OCI-LY7 (cell line): ENCODE measurements at regions of chr4 and their contacts with region 1.

Region 1: GRCh38 chr4:105471566-105472176 is 2.2 kb downstream of the PPA2 start:
- DNase-seq: peak; percentile 79
- H3K4me3 ChIP-seq: peak overlapping the region; percentile 91
- H3K27ac ChIP-seq: peak overlapping the region; percentile 5
- H3K4me1 ChIP-seq: peaks cover 21% of the 10 kb centered on the region
- CTCF ChIP-seq: peak; percentile 88

Region 2: DNA sequence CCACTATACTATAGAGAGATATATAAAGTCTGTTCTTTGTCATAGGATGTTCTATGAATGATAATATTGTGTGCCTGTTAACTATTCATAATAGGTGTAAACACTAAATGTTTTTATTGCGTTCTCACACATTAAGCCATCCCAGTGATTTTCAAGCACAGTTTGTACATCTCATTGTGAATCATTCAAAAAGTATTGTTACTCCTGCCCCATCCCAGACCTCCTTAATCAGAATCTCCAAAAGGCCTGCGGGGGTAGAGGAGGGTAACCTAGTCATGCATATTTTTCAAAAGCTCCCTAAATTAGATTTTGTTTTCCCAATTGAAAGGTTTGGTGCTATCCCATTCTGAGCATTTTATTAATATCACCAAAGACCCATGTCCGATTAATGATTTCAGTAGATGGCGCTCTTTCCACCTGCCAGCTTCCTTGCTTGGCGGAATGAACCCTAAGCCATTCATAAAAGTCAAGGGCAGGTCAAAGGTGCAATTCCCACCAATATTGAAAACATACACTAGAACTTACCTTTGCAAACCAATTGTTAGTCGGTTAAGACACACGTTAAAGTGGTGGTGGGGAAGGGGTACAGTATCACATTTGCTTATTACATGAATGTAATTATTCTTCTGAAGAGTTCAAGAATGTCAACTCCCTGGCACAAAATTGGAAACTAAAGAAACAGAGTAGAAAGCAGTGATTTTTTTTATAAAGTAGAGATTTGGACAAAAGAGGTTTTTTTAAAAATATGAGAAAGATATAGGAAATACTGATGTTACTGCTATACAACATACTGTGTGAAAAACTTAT is 330.8 kb before region 1 on chr4:
- CTCF ChIA-PET with region 1: no interaction called
- POLR2A ChIA-PET with region 1: interaction called, 6 read pairs
- intact Hi-C with region 1: loop called (anchors 1 kb)
- DNase-seq: peak; percentile 55
- H3K4me3 ChIP-seq: no peak overlapping the region
- H3K27ac ChIP-seq: no peak overlapping the region
- H3K4me1 ChIP-seq: peaks cover 4% of the 10 kb centered on the region
- CTCF ChIP-seq: peak; percentile 88

Region 3: GRCh38 chr4:105708530-105709391 is 237.1 kb after region 1 on chr4 and contains the starts of genes GSTCD and INTS12:
- CTCF ChIA-PET with region 1: no interaction called
- POLR2A ChIA-PET with region 1: interaction called, 6 read pairs
- intact Hi-C with region 1: loop called (anchors 1 kb)
- DNase-seq: peak; percentile 93
- H3K4me3 ChIP-seq: peak within 1 kb of the TSS; percentile 90
- H3K27ac ChIP-seq: peak within 1 kb of the TSS; percentile 43
- H3K4me1 ChIP-seq: peaks cover 19% of the 10 kb centered on the region
- CTCF ChIP-seq: no peak
- total RNA-seq, gene GSTCD: 20.2 and 24.0 TPM in 2 replicates
- total RNA-seq, gene INTS12: 10.0 and 14.4 TPM in 2 replicates

Region 4: DNA sequence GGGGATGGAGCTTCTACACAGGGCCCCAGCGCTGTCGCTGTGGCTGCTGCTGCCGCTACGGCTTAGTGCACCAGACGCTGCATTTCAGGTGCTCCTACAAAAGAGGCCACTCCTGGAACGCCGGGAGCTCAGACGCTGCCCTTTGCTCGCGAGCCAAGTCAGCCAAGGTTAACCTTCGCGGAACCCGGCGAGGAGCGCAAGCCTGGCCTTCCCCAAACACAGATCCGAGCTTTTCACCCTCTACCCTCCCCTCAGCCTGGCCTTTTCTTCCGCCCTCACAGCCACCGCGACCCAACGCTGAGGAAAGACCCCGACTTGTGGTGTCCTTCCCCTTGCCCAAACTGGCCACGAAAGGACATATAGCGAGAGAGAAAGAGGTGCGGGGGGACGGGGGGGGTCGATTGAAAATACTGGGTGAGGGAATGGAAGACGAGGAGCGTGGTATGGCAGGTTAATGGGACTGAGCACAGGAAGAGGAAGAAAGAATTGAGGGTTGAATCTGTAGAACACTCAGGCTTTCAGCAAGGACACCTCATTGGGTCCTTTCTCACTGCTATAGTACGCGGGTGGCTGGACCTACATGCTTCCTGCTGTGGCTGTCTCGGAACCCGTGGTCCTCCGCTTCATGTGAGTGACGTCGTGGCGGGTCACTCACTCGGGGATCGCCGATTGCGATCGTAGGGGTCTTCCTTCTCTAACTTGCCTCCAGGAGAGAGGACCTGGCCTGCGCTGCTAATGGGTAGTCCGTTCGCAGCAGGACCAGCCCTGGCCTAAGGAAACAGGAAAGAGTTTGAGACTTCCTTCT is 844.5 kb after region 1 on chr4 and contains the starts of genes AIMP1 and TBCK:
- CTCF ChIA-PET with region 1: interaction called, 3 read pairs
- POLR2A ChIA-PET with region 1: no interaction called
- intact Hi-C with region 1: loop called (anchors 5 kb)
- DNase-seq: peak; percentile 92
- H3K4me3 ChIP-seq: peak within 1 kb of the TSS; percentile 92
- H3K27ac ChIP-seq: peak within 1 kb of the TSS; percentile 75
- H3K4me1 ChIP-seq: peaks cover 24% of the 10 kb centered on the region
- CTCF ChIP-seq: no peak
- total RNA-seq, gene AIMP1: 17.4 and 26.7 TPM in 2 replicates
- total RNA-seq, gene TBCK: 30.2 and 46.5 TPM in 2 replicates